Posterior cingulate gyrus (tissue), 11 donors: ENCODE measurements at regions of chr3 and their contacts with region 1.

Region 1: GRCh38 chr3:51941798-51942602 is at the starts of genes PARP3 and RRP9:
- DNase-seq: peak; percentile 99 to 100 (median 100)

Region 2: GRCh38 chr3:51916418-51916817 is 25.6 kb before region 1 on chr3:
- intact Hi-C with region 1: no loop called
- DNase-seq: no peak

Region 3: DNA sequence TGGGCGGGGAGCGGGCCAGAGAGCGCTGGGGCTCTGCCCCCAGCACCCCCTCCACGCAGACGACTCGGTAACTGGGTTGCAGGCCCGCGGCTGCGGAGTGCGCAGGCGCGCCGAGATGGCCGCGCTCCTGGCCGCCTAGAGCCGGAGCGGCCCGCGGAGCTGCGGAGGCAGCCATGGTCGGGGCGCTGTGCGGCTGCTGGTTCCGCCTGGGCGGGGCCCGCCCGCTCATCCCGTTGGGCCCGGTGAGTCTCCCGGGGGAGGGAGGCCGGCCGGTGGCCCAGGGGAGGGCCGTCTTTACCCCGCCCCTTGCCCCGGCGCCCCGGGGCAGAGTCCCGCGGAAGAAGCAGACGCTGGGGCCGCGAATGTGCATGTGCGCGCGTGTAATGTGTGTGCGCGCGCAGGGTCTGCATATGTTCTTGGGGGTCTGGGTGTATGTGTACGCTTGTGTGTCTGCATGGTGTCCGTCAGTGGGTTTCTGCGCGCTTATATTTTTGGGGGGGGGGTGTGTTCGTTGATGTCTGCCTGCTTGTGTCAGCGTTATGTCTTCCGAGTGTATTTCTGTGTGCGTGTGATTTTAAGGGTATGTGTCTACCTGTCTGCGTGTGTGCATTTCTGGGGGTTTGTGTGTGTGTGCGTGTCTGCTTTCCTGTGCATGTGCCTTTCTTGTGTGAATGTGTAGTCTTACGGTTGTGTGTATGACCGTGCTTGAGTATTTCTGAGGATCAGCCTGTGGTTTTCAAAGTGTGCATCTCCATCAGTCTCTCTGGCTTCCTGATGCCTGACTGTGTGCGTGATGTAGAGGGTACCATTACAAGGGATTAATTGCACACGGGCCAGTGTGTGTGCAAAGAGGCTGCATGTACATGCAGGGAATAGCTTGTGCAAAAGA is 33.2 kb after region 1 on chr3 and contains the start of gene ABHD14A:
- intact Hi-C with region 1: loop called (anchors 1 kb)
- DNase-seq: peak; percentile 62 to 97 (median 73)

Region 4: GRCh38 chr3:51995346-51996163 is 53.6 kb after region 1 on chr3 and contains the start of gene RPL29:
- intact Hi-C with region 1: loop called (anchors 1 kb)
- DNase-seq: peak; percentile 85 to 98 (median 87)

Region 5: GRCh38 chr3:52123106-52123725 is 181.2 kb after region 1 on chr3:
- intact Hi-C with region 1: no loop called
- DNase-seq: peak; percentile 67 to 98 (median 83)